Endothelial cell of umbilical vein (primary cell): ENCODE measurements at regions of chr6 and their contacts with region 1.

Region 1: GRCh38 chr6:145028144-145028818 is 707.0 kb downstream of the EPM2A start:
- DNase-seq: peak; percentile 59
- H3K4me3 ChIP-seq: no peak overlapping the region
- H3K27ac ChIP-seq: no peak overlapping the region
- H3K4me1 ChIP-seq: peaks cover 6% of the 10 kb centered on the region
- H3K27me3 ChIP-seq: no peaks in the 10 kb centered on the region
- CTCF ChIP-seq: peak; percentile 25 to 40
- POLR2A ChIP-seq: no peak

Region 2: DNA sequence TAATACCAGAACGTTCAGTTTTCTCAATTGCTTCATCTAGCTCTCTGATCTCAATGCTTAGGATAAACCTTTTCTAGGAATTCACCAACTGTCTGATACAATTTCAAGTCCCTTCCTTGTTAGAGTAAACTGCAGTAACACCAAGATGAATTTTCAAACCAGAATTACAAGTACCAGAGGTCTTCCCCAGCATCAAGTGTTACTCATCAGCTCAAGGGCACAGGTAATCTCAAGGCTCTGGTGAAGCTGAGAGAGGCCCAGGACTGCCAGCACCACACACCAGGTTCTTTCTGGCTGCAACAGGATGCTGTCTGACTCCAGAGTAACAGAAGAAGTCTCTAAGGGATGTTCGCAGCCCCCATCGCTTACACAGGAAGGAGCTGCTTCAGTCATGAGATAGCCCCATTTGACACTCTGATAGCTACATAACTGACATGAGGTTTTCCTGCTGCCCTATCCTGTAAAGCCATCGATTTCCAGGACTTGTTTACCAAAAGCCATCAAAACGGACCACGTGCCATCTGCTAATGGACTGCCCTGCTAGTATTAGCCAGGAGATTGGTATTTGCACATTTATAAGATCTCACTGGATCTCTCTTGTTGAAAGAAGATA is 193.7 kb before region 1 on chr6:
- CTCF ChIA-PET with region 1: no interaction called
- POLR2A ChIA-PET with region 1: no interaction called
- dilution Hi-C with region 1: no loop called
- intact Hi-C with region 1: loop called (anchors 5 kb)
- DNase-seq: no peak
- H3K4me3 ChIP-seq: no peak overlapping the region
- H3K27ac ChIP-seq: no peak overlapping the region
- H3K4me1 ChIP-seq: no peaks in the 10 kb centered on the region
- H3K27me3 ChIP-seq: no peaks in the 10 kb centered on the region
- CTCF ChIP-seq: no peak
- POLR2A ChIP-seq: no peak

Region 3: DNA sequence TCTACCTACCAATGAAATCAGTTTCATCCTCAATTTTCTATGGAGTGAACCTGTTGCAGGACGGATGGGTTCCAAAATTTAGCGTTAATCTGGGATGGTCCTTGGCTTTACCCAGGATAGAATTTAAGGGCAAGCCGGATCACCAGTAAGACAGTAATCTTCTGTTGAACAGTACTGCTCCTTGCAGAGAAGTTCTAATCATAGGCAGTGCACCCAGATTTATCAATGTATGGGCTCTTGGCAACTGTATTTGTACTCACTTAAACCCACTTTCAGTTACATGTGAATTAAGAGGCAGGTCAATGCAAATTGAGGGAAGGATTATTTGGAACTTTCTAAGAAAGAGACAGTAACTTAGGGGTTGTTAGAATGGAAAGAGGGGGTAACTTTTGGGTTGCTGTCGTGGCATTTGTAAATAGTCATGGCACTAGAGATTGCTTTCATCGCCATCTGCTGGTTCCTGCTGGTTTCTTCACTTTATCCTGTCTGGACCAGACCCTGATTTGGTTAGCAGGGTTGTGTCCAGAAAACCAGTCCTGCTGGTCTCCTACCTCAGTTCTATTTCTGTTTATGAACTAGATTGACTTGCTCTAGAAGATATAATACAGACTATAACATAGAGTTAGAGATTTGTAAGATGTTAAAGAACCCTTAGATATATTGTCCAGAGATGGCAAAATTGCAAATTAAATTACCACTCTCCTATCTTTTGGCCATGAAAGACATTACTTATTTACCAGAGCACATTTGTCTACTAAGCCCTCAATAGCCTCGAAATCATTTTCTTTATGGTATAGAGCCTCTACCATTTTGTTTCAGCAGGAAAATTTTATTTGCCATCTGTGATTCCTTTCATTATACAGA is 96.9 kb before region 1 on chr6:
- CTCF ChIA-PET with region 1: no interaction called
- POLR2A ChIA-PET with region 1: no interaction called
- dilution Hi-C with region 1: no loop called
- intact Hi-C with region 1: loop called (anchors 1 kb)
- DNase-seq: peak; percentile 34
- H3K4me3 ChIP-seq: no peak overlapping the region
- H3K27ac ChIP-seq: no peak overlapping the region
- H3K4me1 ChIP-seq: no peaks in the 10 kb centered on the region
- H3K27me3 ChIP-seq: no peaks in the 10 kb centered on the region
- CTCF ChIP-seq: peak; percentile 47 to 68
- POLR2A ChIP-seq: no peak

Region 4: DNA sequence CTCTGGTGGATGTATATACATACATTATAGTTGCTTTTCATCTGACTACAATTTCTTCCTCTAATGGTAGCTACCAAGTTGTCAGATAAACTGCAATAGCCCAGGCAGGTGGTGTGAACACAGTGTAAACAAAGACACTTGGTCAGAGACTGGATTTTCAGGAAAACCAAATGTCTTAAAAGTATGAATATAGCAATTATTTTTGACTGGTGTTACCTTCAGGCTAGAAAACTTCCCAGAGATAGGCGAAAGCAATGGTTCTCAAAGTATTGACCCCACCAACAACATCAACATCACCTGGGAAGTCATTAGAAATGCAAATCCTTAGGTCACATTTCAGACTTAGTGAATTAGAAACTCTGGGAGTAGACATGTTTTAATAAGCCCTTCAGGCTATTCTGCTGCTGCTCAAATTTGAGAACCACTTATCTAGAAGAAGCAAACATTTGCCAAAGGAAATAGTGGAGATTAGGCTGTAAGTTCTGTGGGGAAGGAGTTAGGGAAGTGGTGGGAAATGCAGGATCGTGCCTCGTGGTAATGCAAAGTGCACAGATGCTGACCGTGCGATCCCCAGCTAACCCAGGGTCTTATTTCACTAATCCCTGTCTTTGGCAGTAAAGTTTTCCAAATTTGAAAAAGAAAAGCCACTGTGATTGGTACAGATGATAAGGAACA is 378.4 kb after region 1 on chr6:
- CTCF ChIA-PET with region 1: no interaction called
- POLR2A ChIA-PET with region 1: no interaction called
- dilution Hi-C with region 1: no loop called
- intact Hi-C with region 1: no loop called
- DNase-seq: no peak
- H3K4me3 ChIP-seq: no peak overlapping the region
- H3K27ac ChIP-seq: no peak overlapping the region
- H3K4me1 ChIP-seq: no peaks in the 10 kb centered on the region
- H3K27me3 ChIP-seq: no peaks in the 10 kb centered on the region
- CTCF ChIP-seq: no peak
- POLR2A ChIP-seq: no peak